Activated T-helper 1 cell treated with anti-CD3 and anti-CD28 coated beads, Interleukin-12 subunit alpha, Interleukin-12 subunit beta, Interleukin-2, Interleukin-4 antibody, amounts not matched to agents 30 ng/mL and 10 ng/mL and 1 ng/mL, durations not matched to agents 14 hours and 24 hours and 36 hours (primary cell): ENCODE measurements at regions of chr3 and their contacts with region 1.

Region 1: DNA sequence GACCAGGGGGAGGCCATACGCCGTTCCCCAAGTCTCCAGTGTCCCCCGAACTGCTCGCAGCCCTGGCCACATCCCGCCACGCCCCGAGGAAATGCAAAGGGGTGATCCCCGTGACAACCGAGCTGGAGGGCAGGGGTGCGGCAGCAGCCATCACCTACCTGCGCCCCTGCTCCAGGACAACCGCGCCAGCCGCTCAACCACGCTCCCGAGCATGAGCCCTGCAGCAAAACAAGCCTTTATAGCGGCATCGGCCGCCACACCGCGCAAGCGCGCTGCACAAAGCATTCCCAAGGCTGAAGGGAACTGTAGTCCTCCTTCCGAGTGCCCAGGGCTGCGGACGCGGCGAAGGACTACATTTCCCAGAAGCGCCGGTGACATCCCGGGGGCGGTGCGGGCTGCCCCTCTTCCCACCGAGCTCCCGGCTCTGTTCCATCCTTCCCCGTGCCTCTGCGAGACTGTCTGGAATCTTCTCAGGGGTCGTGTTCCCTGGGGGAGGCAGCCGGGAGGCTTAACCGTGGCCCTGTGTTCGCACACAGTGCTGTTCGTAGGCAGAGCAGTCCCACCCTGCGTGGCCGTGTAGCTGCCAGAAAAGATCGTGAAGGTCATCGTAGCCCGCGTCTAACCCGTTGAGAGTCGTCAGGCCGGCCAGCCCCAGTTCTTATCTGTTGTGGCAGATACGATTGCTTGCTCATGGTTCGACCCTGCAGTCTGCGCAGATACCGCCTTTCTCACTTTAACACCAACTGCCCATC is at the start of gene ABCC5:
- DNase-seq: peak; percentile 78
- H3K4me3 Mint-ChIP-seq: peak within 1 kb of the TSS; percentile 99
- H3K27ac Mint-ChIP-seq: peak within 1 kb of the TSS; percentile 85
- H3K4me1 Mint-ChIP-seq: peaks cover 30% of the 10 kb centered on the region
- H3K27me3 Mint-ChIP-seq: peaks cover 23% of the 10 kb centered on the region
- total RNA-seq, gene ABCC5: 18.0 and 18.7 TPM in 2 replicates

Region 2: DNA sequence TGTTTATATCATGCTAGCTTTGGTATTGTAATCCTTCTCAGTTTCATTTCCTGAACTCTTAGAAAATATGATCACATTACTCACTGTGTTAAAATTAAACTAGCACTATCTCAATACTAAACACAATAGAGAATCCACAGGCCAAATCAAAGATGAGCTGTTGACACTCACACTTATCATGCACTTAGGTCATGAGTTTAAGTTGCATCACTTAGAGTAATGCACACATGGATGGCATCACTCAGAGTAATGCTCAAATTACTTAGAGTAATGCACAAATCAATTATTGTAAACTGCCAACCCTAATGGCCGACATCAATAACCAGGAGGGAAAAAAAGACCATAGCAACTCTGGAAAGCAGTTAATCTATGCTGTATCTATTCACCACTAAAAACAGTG is 549.4 kb before region 1 on chr3:
- intact Hi-C with region 1: loop called (anchors 5 kb)
- DNase-seq: no peak
- H3K4me3 Mint-ChIP-seq: peak overlapping the region; percentile 12
- H3K27ac Mint-ChIP-seq: peak overlapping the region; percentile 75
- H3K4me1 Mint-ChIP-seq: peaks cover 16% of the 10 kb centered on the region
- H3K27me3 Mint-ChIP-seq: peaks cover 2% of the 10 kb centered on the region

Region 3: GRCh38 chr3:183862610-183863009 is 155.2 kb before region 1 on chr3:
- intact Hi-C with region 1: no loop called
- DNase-seq: no peak
- H3K4me3 Mint-ChIP-seq: no peak overlapping the region
- H3K27ac Mint-ChIP-seq: no peak overlapping the region
- H3K4me1 Mint-ChIP-seq: no peaks in the 10 kb centered on the region
- H3K27me3 Mint-ChIP-seq: no peaks in the 10 kb centered on the region

Region 4: GRCh38 chr3:183895296-183895695 is 122.6 kb before region 1 on chr3:
- intact Hi-C with region 1: loop called (anchors 1 kb)
- DNase-seq: no peak
- H3K4me3 Mint-ChIP-seq: no peak overlapping the region
- H3K27ac Mint-ChIP-seq: no peak overlapping the region
- H3K4me1 Mint-ChIP-seq: peaks cover 6% of the 10 kb centered on the region
- H3K27me3 Mint-ChIP-seq: peaks cover 8% of the 10 kb centered on the region

Region 5: GRCh38 chr3:183980403-183980802 is 37.4 kb before region 1 on chr3:
- intact Hi-C with region 1: no loop called
- DNase-seq: no peak
- H3K4me3 Mint-ChIP-seq: no peak overlapping the region
- H3K27ac Mint-ChIP-seq: no peak overlapping the region
- H3K4me1 Mint-ChIP-seq: no peaks in the 10 kb centered on the region
- H3K27me3 Mint-ChIP-seq: no peaks in the 10 kb centered on the region

Region 6: DNA sequence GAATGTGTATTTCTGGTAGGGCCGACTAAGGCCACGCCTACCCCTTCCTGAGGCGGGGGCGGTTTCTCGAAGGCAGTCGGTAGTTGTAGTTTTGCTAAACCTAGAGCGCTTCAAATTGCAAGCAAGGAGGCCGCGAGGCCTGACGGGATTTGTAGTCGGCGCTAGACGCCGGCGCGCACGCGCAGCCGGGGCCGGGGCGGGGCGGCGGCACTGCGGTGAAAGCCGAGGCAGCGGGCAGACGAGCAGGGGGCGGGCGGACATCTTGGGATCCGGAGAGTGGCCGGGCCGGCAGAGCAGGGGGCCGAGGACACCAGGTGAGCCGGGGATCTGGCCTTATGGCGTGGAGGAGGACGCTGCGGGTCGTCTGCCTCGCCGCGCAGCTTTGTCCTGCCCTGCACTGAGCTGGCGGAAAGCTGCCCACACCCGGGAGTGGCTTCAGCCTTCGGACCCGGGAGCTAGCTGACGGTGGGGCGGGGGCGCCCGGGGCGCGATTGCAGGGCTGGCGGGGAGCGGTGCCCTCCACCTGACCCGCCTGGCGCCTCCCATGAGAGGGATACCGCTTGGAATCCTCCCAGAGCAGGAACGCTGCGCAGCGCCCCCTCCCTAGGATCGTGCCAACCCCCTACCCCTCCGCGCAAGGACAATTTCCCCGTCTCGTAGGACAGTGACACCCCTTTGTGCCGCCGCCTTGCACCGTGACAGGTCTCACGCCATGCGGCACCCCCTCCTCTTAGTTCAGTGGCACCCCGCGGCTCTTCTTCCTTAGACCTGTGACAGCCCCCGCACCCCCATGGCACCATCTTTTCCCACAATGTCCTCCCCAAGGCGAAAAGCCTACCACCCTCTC is 157.0 kb after region 1 on chr3 and contains the start of gene AP2M1:
- intact Hi-C with region 1: loop called (anchors 1 kb)
- DNase-seq: peak; percentile 99
- H3K4me3 Mint-ChIP-seq: peak within 1 kb of the TSS; percentile 95
- H3K27ac Mint-ChIP-seq: peak within 1 kb of the TSS; percentile 85
- H3K4me1 Mint-ChIP-seq: peaks cover 28% of the 10 kb centered on the region
- H3K27me3 Mint-ChIP-seq: no peaks in the 10 kb centered on the region
- total RNA-seq, gene AP2M1: 235 and 238 TPM in 2 replicates

Region 7: GRCh38 chr3:184289426-184289938 is 271.6 kb after region 1 on chr3:
- intact Hi-C with region 1: loop called (anchors 2 kb)
- DNase-seq: peak; percentile 46
- H3K4me3 Mint-ChIP-seq: no peak overlapping the region
- H3K27ac Mint-ChIP-seq: no peak overlapping the region
- H3K4me1 Mint-ChIP-seq: peaks cover 7% of the 10 kb centered on the region
- H3K27me3 Mint-ChIP-seq: peaks cover 10% of the 10 kb centered on the region

Region 8: DNA sequence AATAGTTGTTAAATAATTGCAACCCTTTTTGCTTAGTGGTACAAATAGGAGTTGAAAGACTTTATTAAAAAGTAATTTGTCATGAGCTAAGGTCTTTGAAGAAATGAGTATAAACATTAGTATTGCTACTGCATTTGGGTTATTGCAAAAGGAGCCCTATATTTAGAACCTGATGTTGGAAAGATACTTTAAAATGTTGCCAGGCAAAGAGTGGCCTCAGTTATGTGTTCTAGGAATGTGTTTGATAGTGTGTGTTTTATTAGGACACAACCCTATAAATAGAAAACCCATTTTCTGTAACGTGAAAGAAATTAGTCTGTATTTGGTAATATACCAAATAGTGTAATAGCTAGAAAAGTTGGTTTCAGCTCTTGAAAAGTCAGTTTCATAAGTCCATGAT is 804.8 kb after region 1 on chr3:
- intact Hi-C with region 1: no loop called
- DNase-seq: no peak
- H3K4me3 Mint-ChIP-seq: no peak overlapping the region
- H3K27ac Mint-ChIP-seq: no peak overlapping the region
- H3K4me1 Mint-ChIP-seq: peaks cover 4% of the 10 kb centered on the region
- H3K27me3 Mint-ChIP-seq: no peaks in the 10 kb centered on the region

Region 9: DNA sequence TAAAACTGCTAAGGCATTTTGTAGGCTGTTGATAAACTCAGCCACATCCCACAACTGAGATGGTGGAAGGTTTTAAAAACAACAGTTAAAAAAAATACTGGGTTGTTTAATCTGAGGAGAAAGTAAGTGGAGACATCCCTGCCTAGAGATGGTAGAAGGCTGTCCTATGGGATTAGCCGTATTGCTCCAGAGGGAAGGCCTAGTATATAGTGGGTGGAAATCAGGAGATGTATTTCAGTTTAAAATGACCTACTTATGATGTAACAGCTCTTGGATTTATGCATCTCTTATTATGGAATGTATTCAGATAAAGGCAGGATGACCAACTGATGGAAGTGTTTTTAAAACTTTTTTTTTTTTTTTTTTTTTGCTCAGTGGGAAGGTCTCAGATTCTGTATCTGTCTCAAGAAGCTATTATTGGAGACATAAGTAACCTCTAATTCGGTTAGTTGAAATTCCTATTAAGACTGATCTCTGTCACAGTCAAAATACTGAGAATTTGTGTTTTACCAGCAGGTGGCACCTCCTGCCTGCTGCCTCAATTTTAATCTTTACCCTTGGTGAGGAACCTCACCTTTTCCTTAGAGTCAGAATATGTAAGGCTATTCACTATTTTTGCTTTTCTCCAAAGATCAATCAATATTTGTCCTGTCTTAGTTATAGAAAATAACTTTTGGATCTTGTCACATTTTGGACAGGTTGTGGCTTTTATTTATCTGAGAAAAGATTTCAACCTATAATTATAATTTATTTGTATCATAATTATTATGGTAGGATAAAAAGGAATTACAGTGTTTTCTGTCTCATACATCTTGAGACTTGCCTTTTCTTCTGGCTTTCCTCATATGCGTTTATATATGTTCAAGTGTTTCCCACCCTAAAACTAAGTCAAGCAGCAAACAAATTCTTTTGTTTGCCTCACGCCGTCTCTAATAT is 857.1 kb after region 1 on chr3:
- intact Hi-C with region 1: loop called (anchors 5 kb)
- DNase-seq: no peak
- H3K4me3 Mint-ChIP-seq: no peak overlapping the region
- H3K27ac Mint-ChIP-seq: no peak overlapping the region
- H3K4me1 Mint-ChIP-seq: peaks cover 21% of the 10 kb centered on the region
- H3K27me3 Mint-ChIP-seq: no peaks in the 10 kb centered on the region